SK-MEL-5 (cell line): ENCODE measurements at regions of chr1 and their contacts with region 1.

Region 1: GRCh38 chr1:151098126-151098525 is 27.6 kb downstream of the GABPB2 start:
- DNase-seq: no peak

Region 2: DNA sequence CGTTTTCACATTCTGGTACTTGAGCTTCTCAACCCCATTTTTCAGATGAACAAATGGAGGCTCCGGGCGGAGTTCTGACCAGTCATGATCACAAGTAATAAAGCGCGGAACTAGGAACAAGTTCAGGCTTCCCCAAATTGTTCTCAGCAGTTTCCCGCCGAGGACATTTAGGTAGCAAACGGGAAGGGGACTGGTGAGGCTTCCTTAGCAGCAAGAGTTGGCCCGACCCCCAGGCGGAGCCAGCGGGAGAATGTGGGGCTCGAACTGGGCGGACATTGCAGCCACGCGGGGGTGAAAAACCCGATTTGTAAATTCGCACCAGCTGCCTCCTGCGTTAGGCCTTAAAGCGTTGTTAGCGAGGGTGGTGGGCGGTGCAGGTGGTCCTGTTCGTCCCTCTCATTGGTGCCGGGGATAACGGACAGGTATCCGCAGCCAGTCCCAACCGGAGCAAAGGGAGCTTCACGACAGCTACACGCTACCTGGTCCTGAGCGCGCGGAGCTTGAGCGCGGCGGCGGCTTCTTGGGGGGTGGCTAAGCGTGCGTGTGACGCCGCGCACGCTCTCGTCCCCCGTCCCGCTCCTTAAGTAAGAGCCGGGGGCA is 33.0 kb after region 1 on chr1:
- in situ Hi-C with region 1: loop called (anchors 5 kb)
- DNase-seq: no peak

Region 3: GRCh38 chr1:151156515-151156819 is 58.3 kb after region 1 on chr1 and contains the start of gene TNFAIP8L2:
- in situ Hi-C with region 1: loop called (anchors 10 kb)
- DNase-seq: peak; percentile 50
- total RNA-seq, gene TNFAIP8L2: not detected in 2 replicates

Region 4: DNA sequence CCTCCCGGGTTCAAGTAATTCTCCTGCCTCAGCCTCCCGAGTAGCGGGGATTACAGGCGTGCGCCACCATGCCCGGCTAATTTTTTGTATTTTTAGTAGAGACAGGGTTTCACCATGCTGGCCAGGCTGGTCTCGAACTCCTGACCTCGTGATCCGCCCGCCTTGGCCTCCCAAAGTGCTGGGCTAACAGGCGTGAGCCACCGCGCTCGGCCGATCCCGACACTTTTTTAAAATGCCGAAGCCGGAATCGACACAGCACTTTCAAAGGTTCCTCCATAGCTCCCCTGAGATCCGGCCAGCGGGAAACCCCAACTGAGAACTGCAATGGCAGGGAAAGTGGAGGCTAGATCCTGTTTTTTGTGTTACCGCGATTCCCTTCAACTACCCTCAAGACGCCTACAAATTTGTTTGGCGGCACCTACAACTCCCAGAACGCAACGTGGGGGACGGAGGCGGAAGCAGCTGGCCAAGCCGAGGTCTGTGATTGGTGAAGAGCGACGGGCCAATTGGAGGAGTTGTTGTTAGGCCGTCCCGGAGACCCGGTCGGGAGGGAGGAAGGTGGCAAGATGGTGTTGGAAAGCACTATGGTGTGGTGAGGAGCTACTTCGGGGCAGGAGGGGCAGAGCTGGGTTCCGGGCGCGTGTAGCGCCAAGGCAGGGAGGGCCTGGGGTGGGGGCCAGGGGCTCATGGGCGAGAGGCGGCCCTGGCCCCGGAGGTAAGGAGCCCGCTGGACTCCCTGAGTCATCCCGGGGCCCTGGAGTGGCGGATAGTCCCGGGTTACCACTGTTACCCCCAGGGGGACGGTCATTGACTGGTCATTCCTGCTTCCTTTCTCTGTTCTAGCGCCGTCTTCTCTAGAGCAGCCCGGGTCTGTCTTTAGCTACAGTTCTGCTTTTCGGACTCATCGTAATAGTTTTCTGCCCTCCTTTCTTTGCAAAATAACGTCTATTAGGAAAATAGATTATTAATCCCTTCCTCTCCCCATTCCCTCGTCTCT is 156.4 kb after region 1 on chr1 and contains the start of gene PSMD4:
- in situ Hi-C with region 1: no loop called
- DNase-seq: peak; percentile 99
- total RNA-seq, gene PSMD4: 370 and 398 TPM in 2 replicates

Region 5: GRCh38 chr1:151282883-151283747 is 185.0 kb after region 1 on chr1:
- in situ Hi-C with region 1: no loop called
- DNase-seq: no peak